ENCODE measurements at regions of chr4 and their contacts with region 1.

Region 1: DNA sequence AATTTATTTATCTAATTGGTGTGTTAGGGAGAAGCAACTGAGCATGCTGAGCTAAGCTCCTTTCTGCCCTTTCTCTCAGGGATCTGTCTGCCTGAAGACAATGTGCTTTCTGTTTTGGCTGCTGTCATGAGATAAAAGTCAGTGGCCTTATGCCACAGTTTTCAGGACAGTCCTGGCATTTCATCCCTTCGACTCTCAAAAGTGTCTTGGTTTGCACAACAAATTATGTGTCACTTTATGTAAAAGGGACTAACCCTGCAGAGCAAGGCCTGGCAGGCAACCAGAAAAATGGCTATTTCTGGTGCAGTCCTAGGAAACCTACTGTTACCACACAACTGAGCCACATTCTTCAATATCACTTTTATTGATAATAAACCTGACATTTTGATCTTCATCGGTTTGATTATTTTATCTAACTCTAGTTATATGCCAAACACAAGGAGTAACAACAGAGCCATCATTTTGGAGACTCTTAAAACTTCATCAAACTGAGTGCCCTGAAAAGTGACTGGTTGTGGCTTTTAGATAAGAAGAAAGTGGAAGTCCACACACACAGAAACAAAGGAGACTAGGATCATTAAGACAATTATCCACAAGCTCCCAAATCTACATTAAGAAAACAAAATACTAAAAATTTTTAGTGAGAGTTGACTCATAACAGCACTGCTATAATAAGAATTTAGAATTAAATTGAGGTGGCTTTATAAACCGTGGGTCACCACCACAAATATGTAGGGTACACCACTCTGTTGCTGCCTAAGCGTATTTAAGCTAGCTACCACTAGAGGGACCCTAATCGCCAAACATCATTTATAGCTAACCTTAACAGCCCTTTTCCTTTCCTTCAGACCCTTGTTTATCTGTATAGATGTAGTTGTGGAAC is 95.9 kb upstream of the PTPN13 start:
- DNase-seq: no peak
- H3K4me3 ChIP-seq: no peak overlapping the region
- H3K27ac ChIP-seq: no peak overlapping the region
- H3K4me1 ChIP-seq: peaks cover 0 to 11% (median 1%) of the 10 kb centered on the region in 4 experiments; a peak in 2 of 7 replicates
- H3K27me3 ChIP-seq: no peaks in the 10 kb centered on the region
- CTCF ChIP-seq: peak in 2 of 3 experiments; percentile 70 to 89; a peak in 3 of 4 replicates
- EP300 ChIP-seq: no peak
- POLR2A ChIP-seq: no peak
- RAD21 ChIP-seq: peak; percentile 88 to 90

Region 2: GRCh38 chr4:86306816-86307215 is 191.4 kb before region 1 on chr4:
- CTCF ChIA-PET with region 1: no interaction called
- POLR2A ChIA-PET with region 1: no interaction called
- DNase-seq: no peak
- H3K4me3 ChIP-seq: no peak overlapping the region
- H3K27ac ChIP-seq: no peak overlapping the region
- H3K4me1 ChIP-seq: peaks cover 0 to 11% (median 0%) of the 10 kb centered on the region in 4 experiments; a peak in 2 of 7 replicates
- H3K27me3 ChIP-seq: no peaks in the 10 kb centered on the region
- CTCF ChIP-seq: no peak
- EP300 ChIP-seq: no peak
- POLR2A ChIP-seq: no peak
- RAD21 ChIP-seq: no peak

Region 3: DNA sequence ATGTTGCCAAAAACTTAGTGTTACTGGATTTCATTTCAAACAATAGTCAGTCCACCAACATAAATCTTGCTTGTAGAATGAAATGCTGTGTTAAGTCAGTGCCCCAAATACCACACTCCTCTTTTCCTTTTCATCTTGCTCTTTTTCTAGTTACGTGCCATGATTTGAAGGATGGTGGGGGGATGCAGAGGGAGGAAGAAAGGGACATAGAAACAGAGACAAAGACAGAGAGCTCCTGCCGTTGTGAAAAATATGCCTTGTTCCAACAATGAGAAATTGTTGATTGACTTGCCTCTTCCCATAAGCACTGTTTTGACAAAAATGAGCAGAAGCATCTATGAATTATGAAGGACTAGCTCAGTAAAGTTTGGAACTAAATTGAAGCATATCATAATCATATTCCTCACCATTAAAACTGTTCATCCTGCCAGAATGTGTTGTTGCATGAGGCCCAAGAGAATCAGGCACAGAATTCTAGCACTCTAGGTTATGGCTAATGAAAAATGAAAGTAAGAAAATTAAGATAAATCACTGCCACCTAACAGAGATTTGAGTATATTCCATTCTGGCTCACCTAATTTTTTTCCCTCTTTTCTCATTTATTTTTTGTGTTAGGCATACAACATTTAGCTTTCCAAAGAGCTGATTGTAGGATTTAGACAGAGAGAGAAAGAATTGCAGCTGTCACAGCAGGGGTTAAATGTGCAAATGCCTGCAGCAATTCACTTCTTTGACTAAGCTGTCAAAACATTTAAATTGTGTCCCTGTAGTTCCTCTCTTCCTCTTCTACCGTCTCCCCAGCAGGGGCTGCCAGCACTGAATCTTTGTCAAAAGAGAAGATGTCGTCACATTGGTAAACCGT is 15.7 kb before region 1 on chr4:
- CTCF ChIA-PET with region 1: interaction called, 31 read pairs
- POLR2A ChIA-PET with region 1: interaction called, 5 read pairs
- DNase-seq: peak; percentile 60 to 89
- H3K4me3 ChIP-seq: peak overlapping the region in 1 of 4 experiments; percentile 30; a peak in 1 of 8 replicates
- H3K27ac ChIP-seq: peak overlapping the region; percentile 74
- H3K4me1 ChIP-seq: peaks cover 2 to 24% (median 14%) of the 10 kb centered on the region in 4 experiments; a peak in 4 of 7 replicates
- H3K27me3 ChIP-seq: no peaks in the 10 kb centered on the region
- CTCF ChIP-seq: peak in 2 of 3 experiments; percentile 28 to 60; a peak in 2 of 4 replicates
- EP300 ChIP-seq: peak in 1 of 2 experiments; percentile 91; a peak in 1 of 3 replicates
- POLR2A ChIP-seq: no peak
- RAD21 ChIP-seq: peak in 1 of 2 experiments; percentile 51; a peak in 2 of 4 replicates

Region 4: DNA sequence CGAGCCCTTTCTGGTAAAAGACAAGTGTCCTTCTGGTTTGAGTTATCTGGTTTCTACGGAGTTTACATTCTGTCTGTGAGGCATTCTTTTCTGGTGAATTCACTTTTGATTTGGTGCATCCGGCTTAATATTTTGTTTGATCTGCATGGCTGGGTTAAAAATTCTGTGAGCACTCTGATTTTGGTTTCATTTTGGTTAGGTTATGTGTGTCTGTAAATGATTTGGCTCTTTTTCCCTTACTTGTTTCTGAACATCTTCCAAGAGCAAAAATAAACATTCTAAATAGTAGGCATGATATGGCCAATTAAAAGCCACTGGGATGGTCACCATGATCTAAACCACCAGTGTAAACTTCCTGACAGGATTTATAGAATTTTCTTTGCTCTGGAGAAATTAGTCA is 10.2 kb after region 1 on chr4:
- CTCF ChIA-PET with region 1: interaction called, 68 read pairs
- POLR2A ChIA-PET with region 1: no interaction called
- DNase-seq: no peak
- H3K4me3 ChIP-seq: no peak overlapping the region
- H3K27ac ChIP-seq: no peak overlapping the region
- H3K4me1 ChIP-seq: peaks cover 0 to 4% (median 0%) of the 10 kb centered on the region in 4 experiments; a peak in 1 of 7 replicates
- H3K27me3 ChIP-seq: no peaks in the 10 kb centered on the region
- CTCF ChIP-seq: no peak
- EP300 ChIP-seq: no peak
- POLR2A ChIP-seq: no peak
- RAD21 ChIP-seq: no peak

Region 5: DNA sequence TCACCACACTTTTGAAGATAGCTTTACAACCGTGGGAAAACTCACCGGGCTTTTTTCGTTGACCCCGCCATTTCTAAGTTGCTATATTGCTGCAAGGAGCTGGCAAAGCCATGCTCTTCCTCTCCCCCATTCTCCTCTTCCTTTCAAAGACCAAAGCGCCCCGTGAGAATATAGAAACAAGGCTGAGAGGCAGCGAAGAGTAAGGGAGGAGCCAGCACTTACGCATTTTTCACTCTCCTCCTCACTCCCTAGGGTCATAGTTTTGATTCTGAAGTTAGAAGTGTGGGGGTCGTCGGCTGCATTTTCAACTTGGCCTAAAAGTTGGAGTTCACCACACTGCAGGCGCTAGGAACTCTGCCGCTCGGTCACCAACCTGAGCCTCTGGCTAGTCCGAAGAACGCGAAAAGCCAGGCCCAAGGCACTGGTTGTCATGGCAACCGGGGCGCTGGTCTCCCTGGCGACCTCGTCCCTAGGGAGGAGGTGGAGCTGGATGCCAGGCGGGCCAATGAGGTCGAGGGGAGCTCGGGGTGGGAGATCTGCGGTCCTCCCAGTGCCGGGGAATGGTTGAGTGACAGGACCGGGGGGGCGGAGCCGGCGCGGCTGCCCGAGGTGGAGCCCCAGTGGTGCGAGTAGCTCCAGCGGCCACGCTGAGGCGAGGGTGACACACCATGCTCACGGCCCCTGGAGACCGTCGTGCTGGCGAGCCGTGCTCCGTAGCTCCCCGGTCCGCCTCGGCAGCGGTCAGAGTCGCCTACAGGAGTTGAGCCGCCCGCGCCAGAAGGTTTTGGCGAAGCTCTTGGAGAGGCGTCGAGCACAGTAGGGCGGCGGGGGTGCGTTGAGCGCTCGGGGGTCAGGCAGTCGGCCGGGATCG is 95.7 kb after region 1 on chr4 and contains the start of gene PTPN13:
- CTCF ChIA-PET with region 1: interaction called, 19 read pairs
- POLR2A ChIA-PET with region 1: interaction called, 5 read pairs
- DNase-seq: peak; percentile 99
- H3K4me3 ChIP-seq: peak within 1 kb of the TSS; percentile 87 to 99 (median 96)
- H3K27ac ChIP-seq: peak within 1 kb of the TSS; percentile 76
- H3K4me1 ChIP-seq: peaks cover 3 to 9% (median 5%) of the 10 kb centered on the region in 4 experiments; a peak in 4 of 7 replicates
- H3K27me3 ChIP-seq: no peaks in the 10 kb centered on the region
- CTCF ChIP-seq: peak in 1 of 3 experiments; percentile 7; a peak in 2 of 4 replicates
- EP300 ChIP-seq: no peak
- POLR2A ChIP-seq: peak; percentile 89 to 92
- RAD21 ChIP-seq: peak in 1 of 2 experiments; percentile 11; a peak in 2 of 4 replicates
- total RNA-seq, gene PTPN13: 54.3 and 57.9 TPM in 2 replicates

Region 6: DNA sequence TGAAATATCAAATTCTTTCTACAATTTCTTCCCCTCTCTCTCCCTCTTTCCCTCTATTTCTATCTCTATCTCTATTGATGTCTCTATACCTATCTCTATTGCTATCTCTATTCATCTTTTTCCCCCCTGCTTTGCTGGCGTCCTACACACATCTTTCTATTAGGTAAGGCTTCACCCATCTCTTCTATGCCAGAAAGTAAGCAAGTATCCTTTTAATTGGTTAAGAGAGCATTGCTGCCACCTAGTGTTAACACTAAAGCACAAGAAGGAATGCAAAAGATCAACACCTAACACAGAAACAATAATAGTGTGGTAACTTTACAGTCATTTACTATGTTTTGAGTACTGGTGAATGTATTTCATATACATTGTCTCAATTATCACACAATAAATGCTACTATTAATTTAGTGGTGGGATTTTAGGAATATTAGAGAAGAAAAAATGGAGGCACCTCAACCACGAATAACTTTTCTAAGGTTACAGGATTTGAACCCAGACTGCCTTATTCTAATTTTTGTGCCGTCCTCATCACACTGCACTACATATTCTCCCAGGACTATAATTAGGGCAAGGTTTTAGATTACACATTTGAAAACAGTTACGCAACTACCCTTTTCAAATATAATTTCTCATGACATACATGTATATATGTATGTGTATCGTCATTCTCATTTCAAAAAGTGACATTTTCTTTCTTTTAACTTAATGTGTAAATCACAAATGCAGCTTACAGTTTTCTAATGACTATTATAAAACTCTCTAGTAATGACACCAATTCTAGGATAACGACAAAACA is 397.7 kb after region 1 on chr4:
- CTCF ChIA-PET with region 1: interaction called, 33 read pairs
- POLR2A ChIA-PET with region 1: interaction called, 4 read pairs
- DNase-seq: no peak
- H3K4me3 ChIP-seq: no peak overlapping the region
- H3K27ac ChIP-seq: no peak overlapping the region
- H3K4me1 ChIP-seq: peaks cover 0 to 3% (median under 1%) of the 10 kb centered on the region in 4 experiments; a peak in 1 of 7 replicates
- H3K27me3 ChIP-seq: peaks cover 0 to 6% (median 2%) of the 10 kb centered on the region in 4 experiments; a peak in 3 of 7 replicates
- CTCF ChIP-seq: peak in 2 of 3 experiments; percentile 44 to 80; a peak in 2 of 4 replicates
- EP300 ChIP-seq: no peak
- POLR2A ChIP-seq: no peak
- RAD21 ChIP-seq: peak; percentile 88 to 90

Measured in H1 (cell line).